ENCODE measurements at regions of chr6 and their contacts with region 1.

Region 1: GRCh38 chr6:146543211-146543939 is at the start of gene RAB32:
- DNase-seq: peak; percentile 72 to 80
- ATAC-seq: peak; percentile 70 to 76
- H3K4me3 ChIP-seq: peak within 1 kb of the TSS; percentile 61 to 70 (median 67)
- H3K27ac ChIP-seq: peak within 1 kb of the TSS; percentile 81 to 89 (median 84)
- H3K4me1 ChIP-seq: peaks cover 3 to 5% of the 10 kb centered on the region in 2 donors
- H3K27me3 ChIP-seq: no peaks in the 10 kb centered on the region
- CTCF ChIP-seq: peak; percentile 30 to 70 (median 53)
- POLR2A ChIP-seq: peak; percentile 67 to 85
- total RNA-seq, gene RAB32: 1.2 to 4.3 (median 3.2) TPM

Region 2: DNA sequence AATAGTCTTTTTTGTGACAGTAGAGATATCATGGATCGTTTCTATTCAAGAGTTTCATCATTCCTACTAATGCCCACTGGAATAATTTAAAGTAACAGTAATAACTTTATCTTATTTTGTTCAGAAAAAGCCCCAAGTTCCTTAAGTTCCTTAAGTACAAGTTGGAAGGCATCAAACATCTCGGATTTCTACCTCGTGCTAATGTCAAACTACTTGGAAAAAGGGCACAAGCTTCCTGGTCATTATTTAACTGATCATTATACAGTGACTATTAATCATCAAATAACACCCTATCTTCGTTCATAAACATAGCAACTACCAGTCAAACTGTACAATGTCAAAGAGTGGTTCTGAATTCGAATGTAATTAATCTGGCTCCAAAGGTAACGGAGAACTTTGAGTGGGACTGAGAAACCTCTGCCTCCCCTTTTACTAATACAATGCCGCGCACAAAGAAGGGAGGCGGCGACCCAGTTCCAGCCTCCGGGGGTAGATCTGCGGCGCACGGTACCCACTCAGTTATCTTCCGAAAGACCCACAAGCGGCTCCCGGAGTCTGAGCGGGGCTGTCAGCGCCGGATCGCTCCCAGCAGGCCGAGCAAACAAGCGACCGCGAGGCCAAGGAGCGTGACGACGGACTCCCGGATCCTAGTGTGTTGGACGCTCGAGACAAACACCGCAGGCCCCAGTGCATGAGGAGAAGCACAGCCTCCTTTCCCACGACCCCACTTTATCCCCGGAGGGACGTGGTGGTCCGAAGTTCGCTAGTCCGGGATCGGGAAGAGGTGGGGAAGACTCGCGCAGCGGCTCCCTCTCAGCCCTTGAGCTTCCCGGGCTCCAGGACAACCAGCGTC is 579.9 kb before region 1 on chr6:
- in situ Hi-C with region 1: loop called in 1 of 4 experiments (anchors 25 kb)
- intact Hi-C with region 1: loop called (anchors 10 kb)
- DNase-seq: peak in 1 of 2 donors; percentile 33
- ATAC-seq: peak; percentile 54 to 56
- H3K4me3 ChIP-seq: peak overlapping the region; percentile 77 to 90 (median 84)
- H3K27ac ChIP-seq: peak overlapping the region; percentile 86 to 96 (median 89)
- H3K4me1 ChIP-seq: peaks cover 30 to 33% of the 10 kb centered on the region in 2 donors
- H3K27me3 ChIP-seq: no peaks in the 10 kb centered on the region
- CTCF ChIP-seq: no peak
- POLR2A ChIP-seq: no peak

Region 3: GRCh38 chr6:146700078-146700686 is 156.8 kb after region 1 on chr6:
- in situ Hi-C with region 1: no loop called
- intact Hi-C with region 1: loop called (anchors 10 kb)
- DNase-seq: peak; percentile 46 to 50
- ATAC-seq: peak; percentile 72 to 77
- H3K4me3 ChIP-seq: no peak overlapping the region
- H3K27ac ChIP-seq: no peak overlapping the region
- H3K4me1 ChIP-seq: peaks cover 0 to 3% of the 10 kb centered on the region in 2 donors
- H3K27me3 ChIP-seq: no peaks in the 10 kb centered on the region
- CTCF ChIP-seq: peak; percentile 32 to 70 (median 50)
- POLR2A ChIP-seq: no peak